Activated CD4-positive, alpha-beta T cell treated with anti-CD3 and anti-CD28 coated beads, Interleukin-2, amount 10 ng/mL, durations not matched to agents 24 days and 14 days (primary cell): ENCODE measurements at regions of chr9 and their contacts with region 1.

Region 1: DNA sequence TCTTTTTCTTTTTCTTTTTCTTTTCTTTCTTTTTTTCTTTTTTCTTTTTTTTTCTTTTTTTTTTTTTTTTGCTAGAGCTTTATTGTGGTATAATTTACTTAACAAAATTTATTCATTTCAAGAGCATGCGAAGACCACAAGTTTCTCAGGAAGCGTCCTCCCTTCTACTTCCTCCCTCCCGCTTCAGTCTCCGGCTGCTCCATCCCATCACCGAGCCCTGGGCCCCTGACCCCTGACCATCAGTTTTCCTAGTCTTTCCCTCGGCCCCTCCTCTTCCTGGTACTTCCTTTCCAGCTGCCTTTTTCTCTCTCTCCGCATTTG is 34.7 kb downstream of the C9orf152 start:
- DNase-seq: no peak
- H3K4me3 Mint-ChIP-seq: peak overlapping the region; percentile 56
- H3K27ac Mint-ChIP-seq: peak overlapping the region; percentile 74
- H3K4me1 Mint-ChIP-seq: peaks cover 32% of the 10 kb centered on the region
- H3K27me3 Mint-ChIP-seq: no peaks in the 10 kb centered on the region

Region 2: DNA sequence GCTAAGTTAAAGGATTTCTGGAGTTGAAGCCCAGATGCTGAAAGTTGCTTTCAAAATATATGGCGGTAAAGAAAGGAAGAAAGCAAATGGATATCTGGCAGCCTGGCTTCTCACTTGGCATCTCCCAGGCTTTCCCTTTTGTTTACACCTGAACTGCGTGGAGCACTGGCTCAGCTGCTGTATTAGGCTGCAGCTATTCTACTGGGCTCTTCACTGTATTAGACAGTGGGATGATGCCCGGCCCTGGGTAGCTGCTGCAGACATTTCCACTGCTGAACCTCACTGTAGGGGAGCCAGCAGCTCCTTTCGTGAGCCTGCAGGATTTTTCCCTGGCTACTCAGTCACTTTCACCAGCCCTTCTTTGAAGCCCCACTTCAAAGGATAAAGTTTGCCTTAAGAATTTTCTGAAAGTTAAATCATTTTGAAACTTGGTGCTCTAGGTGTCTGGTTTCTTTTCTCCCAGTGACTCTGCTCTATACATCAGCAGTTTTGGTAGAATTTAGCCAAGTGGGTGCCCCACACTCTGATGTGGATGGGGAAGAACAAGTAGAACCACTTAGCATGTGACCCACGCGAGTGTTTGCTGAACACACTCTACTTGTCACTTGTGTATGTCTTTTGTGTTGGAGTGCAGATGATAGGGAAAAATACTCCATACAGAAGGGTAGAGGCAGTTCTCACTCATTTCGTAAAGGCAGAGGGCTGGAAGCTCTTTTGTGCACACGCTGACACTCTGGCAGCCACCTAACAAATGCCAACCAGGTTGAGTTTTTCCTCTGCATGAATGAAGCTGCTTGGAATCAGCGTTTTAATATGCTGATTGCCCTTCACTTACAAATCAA is 15.2 kb before region 1 on chr9:
- intact Hi-C with region 1: loop called (anchors 2 kb)
- DNase-seq: peak; percentile 69
- H3K4me3 Mint-ChIP-seq: peak overlapping the region; percentile 73
- H3K27ac Mint-ChIP-seq: peak overlapping the region; percentile 54
- H3K4me1 Mint-ChIP-seq: peaks cover 90% of the 10 kb centered on the region
- H3K27me3 Mint-ChIP-seq: no peaks in the 10 kb centered on the region